CD4-positive, alpha-beta memory T cell (primary cell): ENCODE measurements at regions of chr13 and their contacts with region 1.

Region 1: DNA sequence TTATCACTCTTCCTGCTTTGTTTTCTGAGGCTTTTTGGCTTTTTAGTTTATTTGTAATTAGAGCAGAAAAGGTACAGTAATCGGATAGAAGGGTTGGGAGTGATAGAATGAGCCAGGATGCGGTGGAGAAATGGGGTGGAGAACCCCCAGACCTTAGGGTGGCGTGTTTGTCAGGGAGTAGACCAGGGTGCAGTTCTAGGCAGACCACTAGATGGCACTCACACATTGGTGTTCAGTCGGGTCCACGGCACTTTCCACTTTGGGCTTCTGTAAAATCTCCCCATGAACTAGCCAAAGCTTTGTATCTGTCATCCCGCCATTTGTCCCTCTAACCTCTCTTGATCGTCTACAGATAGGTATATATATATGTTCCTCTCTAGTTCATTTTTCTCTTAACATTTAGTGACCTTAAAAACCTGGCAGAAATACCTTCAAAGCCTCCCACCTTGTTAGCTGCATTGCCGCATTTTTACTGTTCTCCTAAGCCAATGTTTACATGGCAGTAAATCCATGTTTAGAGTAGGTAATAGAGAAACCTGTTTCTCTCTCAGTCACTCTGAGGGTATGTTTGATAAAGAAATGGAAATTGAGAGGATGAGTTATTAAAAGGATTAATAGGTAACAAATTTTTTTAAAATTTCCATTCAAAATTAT is 154.9 kb downstream of the TM9SF2 start:
- DNase-seq: peak; percentile 79 to 85 (median 81)
- H3K4me3 ChIP-seq: peak overlapping the region in 1 of 2 donors; percentile 43
- H3K4me3 Mint-ChIP-seq: peak overlapping the region; percentile 74 to 88 (median 86)
- H3K27ac ChIP-seq: peak overlapping the region; percentile 76
- H3K27ac Mint-ChIP-seq: peak overlapping the region; percentile 88 to 96 (median 95)
- H3K4me1 ChIP-seq: peaks cover 56% of the 10 kb centered on the region
- H3K4me1 Mint-ChIP-seq: peaks cover 33 to 55% (median 42%) of the 10 kb centered on the region in 4 donors
- H3K27me3 ChIP-seq: no peaks in the 10 kb centered on the region
- H3K27me3 Mint-ChIP-seq: no peaks in the 10 kb centered on the region

Region 2: GRCh38 chr13:99347911-99348451 is 308.2 kb before region 1 on chr13:
- CTCF ChIA-PET with region 1: no interaction called
- POLR2A ChIA-PET with region 1: no interaction called
- intact Hi-C with region 1: no loop called
- DNase-seq: no peak
- H3K4me3 ChIP-seq: no peak overlapping the region
- H3K4me3 Mint-ChIP-seq: peak overlapping the region in 5 of 8 donors; percentile 30 to 66 (median 56)
- H3K27ac ChIP-seq: peak overlapping the region; percentile 9
- H3K27ac Mint-ChIP-seq: peak overlapping the region; percentile 79 to 99 (median 94)
- H3K4me1 ChIP-seq: peaks cover 84% of the 10 kb centered on the region
- H3K4me1 Mint-ChIP-seq: peaks cover 79 to 98% (median 88%) of the 10 kb centered on the region in 4 donors
- H3K27me3 ChIP-seq: no peaks in the 10 kb centered on the region
- H3K27me3 Mint-ChIP-seq: no peaks in the 10 kb centered on the region

Region 3: GRCh38 chr13:99577934-99578917 is 78.0 kb before region 1 on chr13:
- CTCF ChIA-PET with region 1: interaction called, 16 read pairs
- POLR2A ChIA-PET with region 1: no interaction called
- intact Hi-C with region 1: no loop called
- DNase-seq: no peak
- H3K4me3 ChIP-seq: no peak overlapping the region
- H3K4me3 Mint-ChIP-seq: no peak overlapping the region
- H3K27ac ChIP-seq: no peak overlapping the region
- H3K27ac Mint-ChIP-seq: peak overlapping the region in 4 of 7 donors; percentile 4 to 65 (median 32)
- H3K4me1 ChIP-seq: no peaks in the 10 kb centered on the region
- H3K4me1 Mint-ChIP-seq: peaks cover 0 to 11% (median 5%) of the 10 kb centered on the region in 4 donors
- H3K27me3 ChIP-seq: no peaks in the 10 kb centered on the region
- H3K27me3 Mint-ChIP-seq: no peaks in the 10 kb centered on the region

Region 4: GRCh38 chr13:99620806-99621205 is 35.4 kb before region 1 on chr13:
- CTCF ChIA-PET with region 1: no interaction called
- POLR2A ChIA-PET with region 1: no interaction called
- intact Hi-C with region 1: no loop called
- DNase-seq: no peak
- H3K4me3 ChIP-seq: no peak overlapping the region
- H3K4me3 Mint-ChIP-seq: no peak overlapping the region
- H3K27ac ChIP-seq: no peak overlapping the region
- H3K27ac Mint-ChIP-seq: no peak overlapping the region
- H3K4me1 ChIP-seq: no peaks in the 10 kb centered on the region
- H3K4me1 Mint-ChIP-seq: peaks cover 10 to 16% (median 12%) of the 10 kb centered on the region in 4 donors
- H3K27me3 ChIP-seq: peaks cover 3% of the 10 kb centered on the region
- H3K27me3 Mint-ChIP-seq: no peaks in the 10 kb centered on the region

Region 5: DNA sequence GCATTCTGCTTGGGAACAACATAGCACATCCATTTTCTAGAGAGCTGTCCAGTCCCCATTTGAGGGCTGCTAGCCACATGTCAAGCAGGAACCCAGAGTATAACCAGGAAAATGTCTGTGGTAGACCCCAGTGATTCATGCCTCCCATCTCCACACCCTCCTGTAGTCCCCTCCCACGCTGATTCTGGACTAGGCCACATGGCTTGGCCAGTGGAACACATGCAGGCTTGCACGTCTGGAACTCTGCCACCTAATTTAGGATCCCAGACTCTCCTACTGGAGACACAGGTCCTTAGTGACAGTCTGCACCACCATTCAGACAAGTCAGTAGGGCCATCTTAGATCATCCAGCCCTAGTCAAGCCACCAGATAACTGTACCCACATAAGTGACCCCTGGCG is 165.5 kb after region 1 on chr13:
- CTCF ChIA-PET with region 1: interaction called, 33 read pairs
- POLR2A ChIA-PET with region 1: interaction called, 40 read pairs
- intact Hi-C with region 1: loop called (anchors 1 kb)
- DNase-seq: no peak
- H3K4me3 ChIP-seq: no peak overlapping the region
- H3K4me3 Mint-ChIP-seq: no peak overlapping the region
- H3K27ac ChIP-seq: no peak overlapping the region
- H3K27ac Mint-ChIP-seq: no peak overlapping the region
- H3K4me1 ChIP-seq: peaks cover 17% of the 10 kb centered on the region
- H3K4me1 Mint-ChIP-seq: peaks cover 15 to 26% (median 20%) of the 10 kb centered on the region in 4 donors
- H3K27me3 ChIP-seq: no peaks in the 10 kb centered on the region
- H3K27me3 Mint-ChIP-seq: no peaks in the 10 kb centered on the region

Region 6: GRCh38 chr13:99959538-99960230 is 303.5 kb after region 1 on chr13:
- CTCF ChIA-PET with region 1: no interaction called
- POLR2A ChIA-PET with region 1: no interaction called
- intact Hi-C with region 1: loop called (anchors 5 kb)
- DNase-seq: peak in 1 of 5 donors; percentile 38
- H3K4me3 ChIP-seq: peak overlapping the region in 1 of 2 donors; percentile 30
- H3K4me3 Mint-ChIP-seq: peak overlapping the region; percentile 57 to 87 (median 78)
- H3K27ac ChIP-seq: no peak overlapping the region
- H3K27ac Mint-ChIP-seq: peak overlapping the region in 2 of 7 donors; percentile 79 to 82
- H3K4me1 ChIP-seq: peaks cover 47% of the 10 kb centered on the region
- H3K4me1 Mint-ChIP-seq: peaks cover 17 to 44% (median 28%) of the 10 kb centered on the region in 4 donors
- H3K27me3 ChIP-seq: peaks cover 85% of the 10 kb centered on the region
- H3K27me3 Mint-ChIP-seq: peaks cover 60 to 64% of the 10 kb centered on the region in 2 donors

Region 7: DNA sequence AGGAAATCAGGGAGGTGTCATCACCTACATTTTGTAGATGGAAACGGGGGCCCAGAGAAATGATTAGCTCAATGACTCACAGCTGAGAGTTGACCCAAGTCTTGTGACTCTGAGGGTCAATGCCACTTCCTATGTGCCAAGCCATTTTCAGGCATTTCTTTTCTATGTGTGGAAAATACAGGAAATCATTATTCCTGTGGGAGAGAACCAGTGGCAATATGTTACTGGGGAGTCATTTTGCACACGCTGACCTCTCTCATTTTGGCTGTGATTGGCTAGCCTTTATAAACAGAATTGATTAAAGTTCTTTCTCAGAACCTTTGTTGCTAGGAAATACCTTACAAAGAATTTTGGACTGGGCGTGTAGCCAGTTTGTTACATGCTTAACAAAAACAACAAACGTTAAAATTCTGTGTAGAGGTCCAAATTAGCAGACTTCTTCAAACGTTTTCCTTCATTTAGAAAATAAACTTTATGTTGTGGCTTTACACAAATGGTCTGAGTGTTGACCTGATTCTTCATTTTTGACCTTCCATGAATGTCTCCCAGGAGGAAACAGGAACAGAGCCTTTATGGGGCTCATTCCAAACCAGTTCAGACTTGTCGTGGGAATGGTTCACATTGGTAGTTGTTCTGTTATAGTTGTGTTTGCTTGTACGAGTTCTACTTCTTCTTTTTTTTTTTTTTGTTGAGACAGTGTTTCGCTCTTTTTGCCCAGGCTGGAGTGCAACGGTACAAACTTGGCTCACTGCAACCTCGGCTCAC is 444.1 kb after region 1 on chr13:
- CTCF ChIA-PET with region 1: no interaction called
- POLR2A ChIA-PET with region 1: no interaction called
- intact Hi-C with region 1: no loop called
- DNase-seq: no peak
- H3K4me3 ChIP-seq: no peak overlapping the region
- H3K4me3 Mint-ChIP-seq: no peak overlapping the region
- H3K27ac ChIP-seq: no peak overlapping the region
- H3K27ac Mint-ChIP-seq: no peak overlapping the region
- H3K4me1 ChIP-seq: no peaks in the 10 kb centered on the region
- H3K4me1 Mint-ChIP-seq: peaks cover 0 to 25% (median 10%) of the 10 kb centered on the region in 4 donors
- H3K27me3 ChIP-seq: no peaks in the 10 kb centered on the region
- H3K27me3 Mint-ChIP-seq: no peaks in the 10 kb centered on the region

Region 8: DNA sequence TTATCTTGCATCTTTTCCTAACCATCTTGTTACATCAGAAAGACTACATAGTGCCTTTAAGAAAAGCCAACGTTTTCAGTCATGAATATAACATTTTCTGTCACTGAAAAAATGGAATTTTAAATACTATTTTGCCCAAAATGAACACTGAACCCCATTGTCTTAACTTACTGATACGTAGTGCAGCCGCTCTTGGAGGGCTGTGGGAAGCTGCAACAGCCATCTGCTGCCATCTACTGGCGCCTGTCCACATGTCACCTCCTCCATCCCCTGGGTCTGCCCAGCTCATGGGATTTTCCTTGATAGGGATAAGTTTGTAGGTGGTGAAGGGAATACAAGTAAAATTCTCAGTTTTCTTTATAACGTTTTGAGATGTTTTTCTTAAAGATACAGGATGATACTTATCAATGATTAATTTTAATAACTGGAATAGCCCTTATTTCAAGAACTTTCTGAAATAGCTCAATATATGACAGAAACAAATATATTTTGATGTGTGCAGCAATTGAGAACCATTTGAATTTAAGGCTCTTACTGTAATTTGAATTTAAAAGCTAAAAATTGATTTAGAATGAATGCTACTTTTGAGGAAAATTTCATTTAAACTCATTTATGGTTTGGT is 858.7 kb after region 1 on chr13:
- CTCF ChIA-PET with region 1: interaction called, 158 read pairs
- POLR2A ChIA-PET with region 1: interaction called, 10 read pairs
- intact Hi-C with region 1: loop called (anchors 1 kb)
- DNase-seq: peak; percentile 63 to 71 (median 67)
- H3K4me3 ChIP-seq: no peak overlapping the region
- H3K4me3 Mint-ChIP-seq: no peak overlapping the region
- H3K27ac ChIP-seq: no peak overlapping the region
- H3K27ac Mint-ChIP-seq: no peak overlapping the region
- H3K4me1 ChIP-seq: peaks cover 20% of the 10 kb centered on the region
- H3K4me1 Mint-ChIP-seq: peaks cover 9 to 21% (median 18%) of the 10 kb centered on the region in 4 donors
- H3K27me3 ChIP-seq: no peaks in the 10 kb centered on the region
- H3K27me3 Mint-ChIP-seq: no peaks in the 10 kb centered on the region

Region 9: DNA sequence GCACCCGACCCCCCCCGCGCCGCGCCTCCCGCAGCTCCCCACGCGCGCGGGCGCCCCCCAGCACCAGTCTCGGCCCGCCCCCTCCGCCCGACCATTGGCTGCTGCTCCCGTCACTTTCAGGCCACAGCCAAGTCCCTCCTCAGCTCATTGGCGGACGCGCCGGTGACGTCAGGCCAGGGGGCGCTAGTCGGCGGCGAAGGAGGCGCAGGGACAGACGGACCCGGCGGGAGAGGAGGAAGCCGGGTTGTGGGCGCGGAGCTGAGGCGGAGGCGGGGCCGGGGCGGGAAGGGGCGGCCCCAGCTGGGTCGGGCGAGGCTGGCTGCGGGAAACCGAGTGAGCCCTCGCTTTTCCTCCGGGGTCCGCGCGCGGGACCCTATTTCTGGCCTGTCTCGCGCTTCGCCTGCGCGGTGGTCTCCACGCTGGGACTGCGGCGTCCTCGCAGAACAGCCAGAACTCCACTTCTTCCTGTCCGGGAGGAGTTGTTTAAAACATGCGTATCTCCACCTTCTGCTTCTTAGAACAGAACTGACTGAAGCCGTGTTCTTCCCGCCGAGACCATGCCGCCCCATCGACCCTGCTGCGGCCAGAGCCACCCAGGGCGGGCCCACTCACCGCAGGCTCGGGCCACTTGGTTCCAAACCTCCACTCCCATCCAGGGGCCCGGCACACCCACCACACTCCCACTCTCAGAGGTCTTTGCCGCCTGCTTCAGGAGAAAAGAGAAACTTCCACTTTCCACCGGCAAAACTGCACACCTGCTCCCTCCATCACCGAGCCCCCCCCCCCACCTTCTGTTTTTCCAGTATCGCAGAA is 1018.8 kb after region 1 on chr13:
- CTCF ChIA-PET with region 1: interaction called, 6 read pairs
- POLR2A ChIA-PET with region 1: interaction called, 9 read pairs
- intact Hi-C with region 1: loop called (anchors 2 kb)
- DNase-seq: peak; percentile 98 to 100 (median 99)
- H3K4me3 ChIP-seq: peak overlapping the region; percentile 53 to 74
- H3K4me3 Mint-ChIP-seq: peak overlapping the region; percentile 83 to 95 (median 91)
- H3K27ac ChIP-seq: peak overlapping the region; percentile 73
- H3K27ac Mint-ChIP-seq: peak overlapping the region; percentile 83 to 94 (median 89)
- H3K4me1 ChIP-seq: peaks cover 16% of the 10 kb centered on the region
- H3K4me1 Mint-ChIP-seq: peaks cover 16 to 44% (median 28%) of the 10 kb centered on the region in 4 donors
- H3K27me3 ChIP-seq: no peaks in the 10 kb centered on the region
- H3K27me3 Mint-ChIP-seq: no peaks in the 10 kb centered on the region